AG04450 (cell line): ENCODE measurements at regions of chr15 and their contacts with region 1.

Region 1: GRCh38 chr15:63610200-63610841 is 13.1 kb downstream of the FBXL22 start:
- DNase-seq: peak; percentile 42
- H3K4me3 ChIP-seq: no peak overlapping the region
- H3K27ac ChIP-seq: peak overlapping the region; percentile 66
- H3K27me3 ChIP-seq: no peaks in the 10 kb centered on the region
- CTCF ChIP-seq: peak; percentile 84

Region 2: GRCh38 chr15:63264688-63265302 is 345.5 kb before region 1 on chr15:
- CTCF ChIA-PET with region 1: no interaction called
- POLR2A ChIA-PET with region 1: no interaction called
- DNase-seq: peak; percentile 64
- H3K4me3 ChIP-seq: no peak overlapping the region
- H3K27ac ChIP-seq: no peak overlapping the region
- H3K27me3 ChIP-seq: no peaks in the 10 kb centered on the region
- CTCF ChIP-seq: no peak

Region 3: DNA sequence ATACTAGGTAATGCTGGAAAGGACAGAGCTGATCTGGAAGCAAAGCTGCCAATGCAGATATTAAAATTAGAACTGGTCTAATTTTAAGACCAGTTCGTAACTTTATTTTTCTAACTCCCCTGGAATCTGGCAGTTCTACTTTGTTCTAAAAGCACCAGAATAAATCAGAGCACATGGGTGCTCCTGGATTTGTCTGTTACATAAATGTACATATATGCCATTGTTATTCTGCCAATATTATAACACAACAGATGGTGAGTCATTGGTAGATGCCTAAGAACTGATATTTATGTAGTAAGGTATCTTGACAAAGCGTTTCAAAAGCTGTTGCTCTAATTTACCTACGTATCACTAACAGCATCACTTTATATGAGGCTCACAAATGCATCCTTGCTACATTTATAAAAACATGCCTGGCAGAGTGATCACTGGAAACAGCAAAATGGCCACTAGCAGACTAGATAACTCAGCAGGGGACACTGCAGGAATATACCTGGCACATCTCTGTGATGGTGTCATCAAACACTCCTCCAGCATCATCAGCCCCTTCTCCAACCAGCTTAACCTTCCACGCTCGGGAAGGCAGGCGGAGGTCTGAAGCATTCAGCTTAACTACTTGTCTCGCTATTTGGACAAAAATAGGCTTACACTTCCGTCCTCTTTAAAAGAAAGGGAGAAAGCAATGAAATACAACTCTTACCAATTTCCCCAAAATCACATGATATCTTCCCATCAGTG is 13.1 kb after region 1 on chr15:
- CTCF ChIA-PET with region 1: interaction called, 16 read pairs
- POLR2A ChIA-PET with region 1: no interaction called
- DNase-seq: no peak
- H3K4me3 ChIP-seq: no peak overlapping the region
- H3K27ac ChIP-seq: no peak overlapping the region
- H3K27me3 ChIP-seq: no peaks in the 10 kb centered on the region
- CTCF ChIP-seq: no peak

Region 4: DNA sequence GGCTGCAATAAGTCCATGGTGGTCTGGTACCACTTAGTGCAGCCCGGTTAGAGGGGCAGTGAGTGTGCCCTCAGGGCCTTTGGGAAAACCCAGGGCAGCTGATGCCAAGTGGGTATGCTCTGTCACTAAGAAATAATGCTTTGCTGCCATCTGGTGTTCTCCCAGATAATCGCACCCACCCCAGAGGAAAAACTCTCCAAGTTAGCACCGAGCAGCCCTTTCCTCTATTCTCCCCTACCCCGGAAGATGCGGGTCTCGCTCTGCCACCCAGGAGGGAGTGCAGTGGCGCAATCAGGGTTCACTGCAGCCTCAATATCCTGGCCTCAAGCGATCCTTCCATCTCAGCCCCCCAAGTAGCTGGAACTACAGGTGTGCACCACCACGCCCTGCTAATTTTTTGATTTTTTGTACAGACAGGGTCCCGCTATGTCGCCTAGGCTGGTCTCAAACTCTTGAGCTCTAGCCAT is 457.3 kb after region 1 on chr15:
- CTCF ChIA-PET with region 1: interaction called, 51 read pairs
- POLR2A ChIA-PET with region 1: interaction called, 3 read pairs
- DNase-seq: peak; percentile 8
- H3K4me3 ChIP-seq: no peak overlapping the region
- H3K27ac ChIP-seq: no peak overlapping the region
- H3K27me3 ChIP-seq: no peaks in the 10 kb centered on the region
- CTCF ChIP-seq: peak; percentile 81